ENCODE measurements at regions of chr1 and their contacts with region 1.

Region 1: DNA sequence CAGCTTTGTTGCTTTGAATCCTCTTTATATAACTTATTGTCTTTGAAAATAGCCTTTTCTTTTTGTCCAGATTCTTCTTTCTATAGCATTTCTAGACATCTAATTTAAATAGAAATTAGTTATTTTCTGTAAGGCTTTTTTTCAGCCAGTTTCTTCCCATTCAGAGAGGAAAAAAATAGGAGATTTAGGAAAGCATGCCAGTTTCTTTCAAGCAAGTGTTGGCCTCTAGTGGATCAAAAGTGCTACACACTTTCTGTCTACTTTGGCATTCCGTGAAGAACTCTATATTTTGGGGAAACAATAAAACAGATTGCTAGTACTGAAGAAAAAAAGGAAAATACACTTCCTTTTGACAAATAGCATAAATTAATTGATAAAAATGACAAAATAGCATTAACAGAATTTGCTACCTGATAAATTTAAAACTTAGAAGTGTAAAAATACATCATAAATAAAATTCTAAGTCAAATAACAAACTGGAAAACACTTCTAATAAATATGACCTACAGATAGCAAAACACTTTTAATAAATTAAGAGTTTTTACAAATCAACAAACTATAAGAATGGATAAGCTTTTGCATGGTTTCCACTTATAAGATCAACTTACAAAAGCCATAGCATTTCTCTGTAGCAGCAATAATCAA is 13.1 kb upstream of the EXO1 start:
- DNase-seq: peak in 1 of 3 donors; percentile 29
- H3K4me3 ChIP-seq: no peak overlapping the region
- H3K4me3 Mint-ChIP-seq: no peak overlapping the region
- H3K27ac ChIP-seq: no peak overlapping the region
- H3K27ac Mint-ChIP-seq: no peak overlapping the region
- H3K4me1 ChIP-seq: no peaks in the 10 kb centered on the region
- H3K4me1 Mint-ChIP-seq: peaks cover 3% of the 10 kb centered on the region
- H3K27me3 ChIP-seq: peaks cover 0 to 3% of the 10 kb centered on the region in 2 donors
- H3K27me3 Mint-ChIP-seq: peaks cover 0 to 6% (median 0%) of the 10 kb centered on the region in 3 donors
- CTCF ChIP-seq: peak; percentile 71

Region 2: GRCh38 chr1:241470908-241471590 is 363.8 kb before region 1 on chr1:
- intact Hi-C with region 1: no loop called
- DNase-seq: no peak
- H3K4me3 ChIP-seq: no peak overlapping the region
- H3K4me3 Mint-ChIP-seq: no peak overlapping the region
- H3K27ac ChIP-seq: no peak overlapping the region
- H3K27ac Mint-ChIP-seq: no peak overlapping the region
- H3K4me1 ChIP-seq: no peaks in the 10 kb centered on the region
- H3K4me1 Mint-ChIP-seq: no peaks in the 10 kb centered on the region
- H3K27me3 ChIP-seq: peaks cover 0 to 3% of the 10 kb centered on the region in 2 donors
- H3K27me3 Mint-ChIP-seq: peaks cover 1 to 10% (median 4%) of the 10 kb centered on the region in 3 donors
- CTCF ChIP-seq: no peak

Region 3: DNA sequence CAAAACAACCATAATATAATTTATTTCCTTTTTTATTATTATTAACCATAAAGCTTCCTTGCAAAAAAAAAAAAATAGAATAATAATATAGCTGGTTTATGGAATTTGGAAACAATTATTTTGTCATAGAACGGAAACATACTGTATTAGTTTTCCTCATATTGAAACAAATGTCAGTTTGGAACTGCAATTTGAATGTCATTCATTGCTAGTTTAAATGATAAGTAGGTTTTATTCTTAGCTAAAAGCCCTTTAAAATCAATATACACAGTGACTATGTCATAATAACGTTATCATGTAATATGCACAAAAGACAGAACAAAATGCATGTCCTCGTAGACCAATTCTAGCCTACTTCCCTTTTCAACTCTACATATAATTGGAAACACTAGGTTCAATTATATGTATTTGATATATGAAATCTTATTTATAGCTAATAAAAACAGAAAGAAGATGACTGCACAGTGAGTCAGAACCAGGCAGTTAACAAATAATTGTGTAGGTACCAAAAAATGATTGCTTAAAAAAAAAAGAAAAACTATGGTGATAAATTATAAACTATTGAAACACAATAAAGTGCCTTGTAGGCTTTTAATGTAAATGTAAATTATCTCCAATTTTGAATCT is 72.0 kb before region 1 on chr1:
- intact Hi-C with region 1: loop called in 1 of 2 experiments (anchors 10 kb)
- DNase-seq: no peak
- H3K4me3 ChIP-seq: no peak overlapping the region
- H3K4me3 Mint-ChIP-seq: no peak overlapping the region
- H3K27ac ChIP-seq: no peak overlapping the region
- H3K27ac Mint-ChIP-seq: no peak overlapping the region
- H3K4me1 ChIP-seq: no peaks in the 10 kb centered on the region
- H3K4me1 Mint-ChIP-seq: peaks cover 4% of the 10 kb centered on the region
- H3K27me3 ChIP-seq: no peaks in the 10 kb centered on the region
- H3K27me3 Mint-ChIP-seq: peaks cover 6 to 20% (median 7%) of the 10 kb centered on the region in 3 donors
- CTCF ChIP-seq: no peak